ENCODE measurements at regions of chrX and their contacts with region 1.

Region 1: GRCh38 chrX:39907964-39908616 is 189.7 kb downstream of the BCOR start:
- DNase-seq: peak; percentile 86
- H3K4me3 ChIP-seq: no peak overlapping the region
- H3K27ac ChIP-seq: peak overlapping the region; percentile 71 to 75 (median 72)
- H3K4me1 ChIP-seq: peaks cover 0 to 38% (median 19%) of the 10 kb centered on the region in 4 donors
- H3K27me3 ChIP-seq: peaks cover 0 to 2% (median 0%) of the 10 kb centered on the region in 3 donors
- CTCF ChIP-seq: no peak
- EP300 ChIP-seq: no peak
- POLR2A ChIP-seq: no peak

Region 2: DNA sequence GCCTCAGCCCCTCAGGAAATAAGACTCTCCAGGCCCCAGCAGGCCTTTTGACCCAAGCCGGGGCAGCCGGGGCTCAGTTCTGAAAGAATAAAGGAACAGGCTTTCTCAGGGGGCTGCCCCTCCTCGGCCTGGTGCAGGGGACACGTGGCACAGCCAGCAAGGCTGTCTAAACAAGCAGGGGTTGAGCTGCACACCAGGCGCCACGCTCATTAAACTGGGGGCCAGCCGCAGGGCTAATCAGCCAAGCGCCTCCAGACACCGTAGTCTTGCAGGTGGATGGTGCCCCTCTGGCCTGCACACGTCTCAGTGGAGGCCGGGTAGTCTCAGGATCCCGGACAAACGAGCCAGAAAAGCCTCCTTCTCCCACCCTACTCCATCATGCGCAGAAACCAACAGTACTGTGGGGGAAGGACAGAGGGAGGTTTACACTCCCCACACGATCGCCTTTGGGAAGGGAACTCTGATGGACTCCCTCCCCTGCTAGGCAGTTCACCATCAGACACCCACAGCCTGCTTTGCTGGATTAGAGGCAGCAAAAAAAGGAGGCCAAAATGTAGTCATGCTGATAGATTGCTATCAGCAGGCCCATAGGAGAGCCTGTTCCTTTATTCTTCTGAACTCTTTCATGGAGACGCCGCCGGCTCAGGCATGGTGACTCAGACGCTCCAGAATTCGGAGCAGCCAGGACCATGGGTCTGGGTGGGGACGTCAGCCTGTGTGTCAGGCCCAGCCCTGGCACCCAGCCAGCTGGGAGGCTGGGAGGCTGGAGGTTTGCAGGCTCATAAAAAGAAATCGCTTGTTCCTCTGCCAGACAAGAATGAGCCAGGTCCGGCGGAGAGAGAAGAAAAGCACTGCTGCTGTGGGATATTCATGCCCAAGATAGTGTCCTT is 152.7 kb before region 1 on chrX:
- intact Hi-C with region 1: loop called (anchors 10 kb)
- DNase-seq: peak; percentile 96
- H3K4me3 ChIP-seq: no peak overlapping the region
- H3K27ac ChIP-seq: peak overlapping the region; percentile 79 to 85 (median 81)
- H3K4me1 ChIP-seq: peaks cover 0 to 53% (median 40%) of the 10 kb centered on the region in 4 donors
- H3K27me3 ChIP-seq: no peaks in the 10 kb centered on the region
- CTCF ChIP-seq: no peak
- EP300 ChIP-seq: peak in 2 of 4 donors; percentile 41 to 76
- POLR2A ChIP-seq: no peak

Region 3: DNA sequence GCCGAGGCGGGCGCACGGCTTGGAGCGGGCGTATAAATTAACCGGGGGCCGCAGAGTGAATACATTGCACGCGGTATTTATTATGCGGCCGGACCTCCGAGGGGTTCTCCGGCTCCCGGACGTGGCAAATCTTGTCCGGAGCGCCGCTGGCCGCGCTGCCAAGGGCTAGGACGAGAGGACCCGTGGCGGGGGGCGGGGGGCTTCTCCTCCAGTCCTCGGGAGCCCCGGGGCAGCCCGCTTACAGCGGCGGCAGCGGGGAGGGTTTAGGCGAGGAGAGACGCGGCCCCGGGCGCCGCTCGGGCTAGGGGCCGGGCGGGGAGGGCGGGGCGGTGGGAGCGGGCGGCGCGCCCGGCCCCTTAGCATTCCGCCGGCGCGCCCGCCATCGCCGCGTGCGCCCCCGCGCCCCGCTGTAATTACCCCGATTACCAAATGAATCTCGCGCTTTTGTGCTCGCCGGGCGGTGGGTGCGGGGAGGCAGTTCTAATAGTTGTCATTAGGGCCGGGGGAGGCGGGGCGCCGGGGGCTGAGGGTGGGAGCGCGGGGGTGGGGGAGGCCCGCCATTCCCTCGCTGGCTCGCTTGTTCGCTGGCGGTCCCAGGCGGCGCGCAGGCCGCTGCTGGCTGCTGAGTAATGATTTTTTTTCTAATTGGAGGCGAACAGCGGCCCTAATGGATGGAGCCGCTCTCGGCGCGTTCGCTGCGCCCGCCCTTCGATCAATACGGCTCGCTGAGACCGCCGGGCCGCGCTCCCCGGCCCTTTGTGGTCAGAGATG is 87.0 kb before region 1 on chrX:
- intact Hi-C with region 1: loop called (anchors 5 kb)
- DNase-seq: no peak
- H3K4me3 ChIP-seq: peak overlapping the region in 3 of 4 donors; percentile 44 to 49 (median 48)
- H3K27ac ChIP-seq: peak overlapping the region in 2 of 4 donors; percentile 17 to 41
- H3K4me1 ChIP-seq: peaks cover 0 to 10% (median 2%) of the 10 kb centered on the region in 4 donors
- H3K27me3 ChIP-seq: peaks cover 0 to 10% (median 0%) of the 10 kb centered on the region in 3 donors
- CTCF ChIP-seq: no peak
- EP300 ChIP-seq: no peak
- POLR2A ChIP-seq: no peak

Region 4: GRCh38 chrX:40083120-40083978 is 175.3 kb after region 1 on chrX:
- intact Hi-C with region 1: loop called (anchors 5 kb)
- DNase-seq: no peak
- H3K4me3 ChIP-seq: peak overlapping the region; percentile 18 to 47 (median 44)
- H3K27ac ChIP-seq: peak overlapping the region in 3 of 4 donors; percentile 35 to 56 (median 37)
- H3K4me1 ChIP-seq: peaks cover 0 to 74% (median 68%) of the 10 kb centered on the region in 4 donors
- H3K27me3 ChIP-seq: no peaks in the 10 kb centered on the region
- CTCF ChIP-seq: no peak
- EP300 ChIP-seq: no peak
- POLR2A ChIP-seq: no peak

Region 5: DNA sequence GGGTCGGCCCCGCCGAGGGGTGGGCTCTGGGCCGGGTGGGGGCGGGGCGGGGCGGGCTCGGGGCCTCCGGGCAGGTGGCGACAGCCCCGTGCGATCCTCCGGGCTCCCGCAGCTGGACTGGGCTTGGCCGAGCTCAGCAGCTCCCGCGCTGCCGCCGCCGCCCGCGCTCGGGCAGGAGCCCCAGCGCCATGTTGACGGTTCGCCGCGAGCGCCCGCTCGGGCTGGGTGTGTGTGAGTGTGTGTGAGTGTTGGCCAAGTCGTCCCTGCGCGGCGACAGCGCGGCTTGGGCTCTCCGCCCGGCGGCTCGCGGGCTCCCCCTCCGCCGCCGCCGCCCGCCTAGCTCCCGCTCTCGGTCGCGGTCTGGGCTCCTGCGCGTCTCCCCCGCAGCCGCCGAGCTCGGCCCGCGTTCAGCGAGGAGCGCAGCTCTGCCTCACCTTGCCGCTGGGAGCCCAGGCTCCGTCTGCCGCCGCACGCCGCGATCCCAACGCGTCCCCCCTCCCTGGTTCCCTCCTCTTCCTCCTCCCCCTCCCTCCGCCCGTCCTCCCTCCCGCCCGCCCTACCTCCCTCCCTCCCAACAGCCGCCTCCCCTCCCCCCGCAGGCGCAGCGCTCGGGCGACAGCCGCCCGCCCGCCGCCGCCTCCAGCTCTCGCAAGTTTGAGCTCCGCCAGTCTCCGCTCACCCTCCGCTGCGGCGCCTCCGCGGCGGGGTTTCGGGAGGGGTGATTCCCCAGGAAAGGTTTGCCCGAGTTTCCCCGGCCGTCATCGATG is 189.6 kb after region 1 on chrX and contains the start of gene BCOR:
- intact Hi-C with region 1: loop called (anchors 5 kb)
- DNase-seq: peak; percentile 90
- H3K4me3 ChIP-seq: peak within 1 kb of the TSS; percentile 56 to 80 (median 69)
- H3K27ac ChIP-seq: peak within 1 kb of the TSS; percentile 87 to 96 (median 92)
- H3K4me1 ChIP-seq: peaks cover 0 to 81% (median 26%) of the 10 kb centered on the region in 4 donors
- H3K27me3 ChIP-seq: peaks cover 0 to 21% (median 0%) of the 10 kb centered on the region in 3 donors
- CTCF ChIP-seq: no peak
- EP300 ChIP-seq: no peak
- POLR2A ChIP-seq: peak in 1 of 2 donors; percentile 22
- total RNA-seq, gene BCOR: 15.8 to 31.6 (median 23.0) TPM

Region 6: DNA sequence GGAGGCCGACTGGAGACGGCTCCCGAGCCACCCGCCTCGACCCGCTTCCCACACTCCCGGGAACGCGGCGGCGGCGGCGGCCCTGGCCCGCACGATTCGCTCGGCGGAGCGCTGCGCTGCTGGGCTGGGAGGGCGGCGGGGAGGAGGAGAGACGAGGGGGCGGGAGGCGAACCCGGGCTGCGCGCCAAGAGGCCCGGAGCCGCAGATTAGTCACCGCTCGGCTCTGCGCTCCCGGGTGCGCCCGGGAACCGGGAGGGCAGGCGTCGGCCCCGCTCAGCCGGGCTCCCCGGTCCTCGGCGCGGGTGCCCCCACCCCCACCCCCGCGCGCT is 200.8 kb after region 1 on chrX:
- intact Hi-C with region 1: no loop called
- DNase-seq: peak; percentile 93
- H3K4me3 ChIP-seq: peak overlapping the region; percentile 27 to 72 (median 71)
- H3K27ac ChIP-seq: peak overlapping the region; percentile 90 to 98 (median 94)
- H3K4me1 ChIP-seq: peaks cover 0 to 58% (median 27%) of the 10 kb centered on the region in 4 donors
- H3K27me3 ChIP-seq: peaks cover 0 to 21% (median 0%) of the 10 kb centered on the region in 3 donors
- CTCF ChIP-seq: no peak
- EP300 ChIP-seq: no peak
- POLR2A ChIP-seq: no peak

Region 7: DNA sequence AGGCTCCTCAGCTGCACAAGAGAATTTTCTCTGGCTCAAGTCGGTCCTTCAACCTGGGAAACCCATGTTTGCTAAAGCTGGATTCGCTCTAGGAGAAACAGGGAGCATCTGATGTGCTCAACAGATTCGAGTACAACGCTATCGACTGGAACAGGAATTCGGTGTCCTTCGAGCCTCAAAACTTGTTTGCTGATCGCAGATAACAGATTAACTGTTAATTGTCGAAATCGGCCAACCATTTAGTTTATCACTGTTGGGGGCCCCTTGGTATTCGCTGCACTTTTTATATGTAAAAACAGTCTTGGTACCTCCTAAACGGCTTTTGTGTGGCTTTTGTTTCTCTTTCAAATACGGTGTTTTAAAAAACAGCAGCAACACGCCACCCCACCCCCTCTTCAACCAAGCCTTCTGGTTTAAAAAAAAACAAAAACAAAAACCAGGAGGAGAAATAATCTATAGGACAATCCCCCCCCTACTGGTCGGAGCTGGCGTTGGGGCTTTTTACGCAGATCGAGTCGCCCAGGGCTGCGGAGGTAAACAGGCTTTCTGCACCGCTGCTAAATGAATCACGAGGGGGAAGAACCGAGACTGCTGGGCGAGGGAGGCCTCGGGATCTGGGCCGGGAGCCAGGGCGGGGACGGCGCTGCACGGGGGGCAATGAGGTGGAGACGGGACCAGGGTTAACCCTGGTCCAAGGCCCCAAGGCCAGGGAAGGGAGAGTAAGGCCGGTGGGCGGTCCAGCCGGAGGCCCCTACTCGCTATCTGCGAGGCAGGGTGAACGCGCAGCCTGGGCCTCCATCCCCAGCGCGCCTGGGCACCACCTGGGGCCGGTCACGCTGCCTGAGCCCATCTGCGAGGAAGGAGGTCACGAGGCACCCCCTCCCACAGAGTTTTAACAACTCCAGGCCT is 261.4 kb after region 1 on chrX:
- intact Hi-C with region 1: loop called (anchors 5 kb)
- DNase-seq: peak; percentile 82
- H3K4me3 ChIP-seq: peak overlapping the region in 1 of 4 donors; percentile 13
- H3K27ac ChIP-seq: peak overlapping the region; percentile 6 to 97 (median 91)
- H3K4me1 ChIP-seq: peaks cover 0 to 59% (median 42%) of the 10 kb centered on the region in 4 donors
- H3K27me3 ChIP-seq: peaks cover 0 to 9% (median 0%) of the 10 kb centered on the region in 3 donors
- CTCF ChIP-seq: peak in 3 of 4 experiments; percentile 24 to 31 (median 30)
- EP300 ChIP-seq: no peak
- POLR2A ChIP-seq: no peak